ENCODE measurements at regions of chr5 and their contacts with region 1.

Region 1: DNA sequence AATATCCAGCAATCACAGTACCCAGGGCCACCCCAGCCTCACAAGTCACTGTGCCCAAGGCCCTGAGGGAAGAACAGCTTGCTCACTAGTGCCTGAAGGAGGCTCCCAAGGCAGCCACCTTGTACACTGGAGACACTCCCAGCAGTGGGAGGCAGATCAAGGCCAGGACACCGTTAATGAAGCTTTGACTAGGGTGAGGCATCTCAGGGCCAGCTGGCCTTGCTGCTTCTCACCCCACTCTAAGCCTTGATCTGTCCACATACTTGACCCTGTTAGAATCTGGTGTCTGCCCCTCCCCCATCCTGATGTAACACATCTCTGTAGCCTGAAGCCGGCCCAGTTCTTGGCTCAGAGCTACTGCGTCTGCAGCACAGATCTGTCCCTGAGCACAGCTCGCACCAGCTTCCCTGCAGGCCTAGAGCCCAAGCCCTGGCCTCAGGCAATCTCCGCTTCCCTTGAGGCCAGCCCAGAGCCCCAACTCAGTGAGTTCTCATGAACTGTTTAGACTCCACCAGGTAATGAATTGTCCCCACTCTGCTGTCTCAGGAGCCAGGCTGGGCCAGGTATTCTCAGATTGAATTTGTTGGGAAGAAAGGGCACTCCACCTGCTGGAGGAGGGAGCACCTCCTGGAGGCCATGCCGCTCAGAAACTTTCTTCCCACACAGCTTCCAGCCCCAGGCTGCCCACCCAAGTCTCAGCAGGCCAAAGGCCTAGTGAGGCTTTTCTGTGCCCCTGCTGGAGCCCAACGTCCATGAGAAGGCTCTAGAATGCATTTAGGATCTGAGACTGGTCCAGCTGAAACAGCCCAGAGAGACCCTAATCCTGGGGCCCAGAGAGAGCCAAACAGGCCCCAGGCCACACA is 13.5 kb upstream of the JADE2 start:
- DNase-seq: peak; percentile 76
- ATAC-seq: peak; percentile 68
- H3K4me3 Mint-ChIP-seq: peak overlapping the region; percentile 30
- H3K27ac Mint-ChIP-seq: peak overlapping the region; percentile 97
- H3K4me1 Mint-ChIP-seq: peaks cover 51% of the 10 kb centered on the region
- H3K27me3 Mint-ChIP-seq: no peaks in the 10 kb centered on the region
- CTCF ChIP-seq: no peak

Region 2: GRCh38 chr5:134430001-134430569 is 81.9 kb before region 1 on chr5:
- CTCF ChIA-PET with region 1: interaction called, 15 read pairs
- POLR2A ChIA-PET with region 1: interaction called, 8 read pairs
- DNase-seq: peak; percentile 33
- ATAC-seq: peak; percentile 81
- H3K4me3 Mint-ChIP-seq: peak overlapping the region; percentile 65
- H3K27ac Mint-ChIP-seq: peak overlapping the region; percentile 83
- H3K4me1 Mint-ChIP-seq: peaks cover 58% of the 10 kb centered on the region
- H3K27me3 Mint-ChIP-seq: no peaks in the 10 kb centered on the region
- CTCF ChIP-seq: no peak